ENCODE measurements at regions of chr9 and their contacts with region 1.

Region 1: DNA sequence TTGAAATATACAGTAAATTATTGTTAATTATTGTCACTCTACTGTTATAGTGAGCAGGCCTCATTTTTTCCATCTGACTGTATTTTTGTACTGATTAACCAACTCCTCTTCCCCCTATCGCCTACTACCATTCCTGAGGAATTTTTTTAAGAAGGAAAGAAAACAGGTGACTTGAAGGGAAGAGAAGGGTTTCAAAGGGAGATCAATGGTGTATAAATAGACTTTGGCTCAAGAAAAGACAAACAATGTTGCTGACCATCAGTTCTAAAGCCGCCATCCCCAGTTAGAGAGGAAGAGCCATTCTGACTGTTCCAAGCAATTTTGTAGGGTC is 69.7 kb downstream of the BAAT start:
- DNase-seq: no peak
- H3K4me3 ChIP-seq: no peak overlapping the region
- H3K27ac ChIP-seq: no peak overlapping the region
- H3K4me1 ChIP-seq: no peaks in the 10 kb centered on the region
- H3K27me3 ChIP-seq: no peaks in the 10 kb centered on the region
- CTCF ChIP-seq: no peak
- POLR2A ChIP-seq: no peak

Region 2: DNA sequence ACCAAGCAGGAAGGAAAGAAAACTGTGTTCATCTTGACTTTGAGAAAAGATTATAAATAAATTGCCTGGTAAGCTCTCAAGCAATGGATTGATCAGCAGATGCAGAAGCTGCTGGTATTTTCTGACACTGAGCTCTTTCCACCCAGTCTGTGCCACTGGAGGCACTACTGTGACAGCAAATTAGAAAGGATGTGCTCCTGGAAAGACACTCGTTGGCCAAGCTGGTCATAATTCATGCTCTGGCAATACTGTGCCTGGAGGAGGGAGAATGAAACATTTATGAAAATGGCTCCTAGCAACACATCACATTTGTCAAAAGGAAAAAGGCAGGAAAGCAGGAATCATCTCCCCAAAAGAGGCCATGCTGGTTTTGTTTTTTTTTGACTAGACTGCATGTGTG is 653.0 kb before region 1 on chr9:
- intact Hi-C with region 1: loop called (anchors 5 kb)
- DNase-seq: no peak
- H3K4me3 ChIP-seq: no peak overlapping the region
- H3K27ac ChIP-seq: no peak overlapping the region
- H3K4me1 ChIP-seq: no peaks in the 10 kb centered on the region
- H3K27me3 ChIP-seq: no peaks in the 10 kb centered on the region
- CTCF ChIP-seq: no peak
- POLR2A ChIP-seq: no peak

Region 3: GRCh38 chr9:102273952-102274351 is 958.9 kb after region 1 on chr9:
- intact Hi-C with region 1: no loop called
- DNase-seq: no peak
- H3K4me3 ChIP-seq: no peak overlapping the region
- H3K27ac ChIP-seq: no peak overlapping the region
- H3K4me1 ChIP-seq: no peaks in the 10 kb centered on the region
- H3K27me3 ChIP-seq: no peaks in the 10 kb centered on the region
- CTCF ChIP-seq: no peak
- POLR2A ChIP-seq: no peak